CD4-positive, alpha-beta memory T cell (primary cell): ENCODE measurements at regions of chr2 and their contacts with region 1.

Region 1: DNA sequence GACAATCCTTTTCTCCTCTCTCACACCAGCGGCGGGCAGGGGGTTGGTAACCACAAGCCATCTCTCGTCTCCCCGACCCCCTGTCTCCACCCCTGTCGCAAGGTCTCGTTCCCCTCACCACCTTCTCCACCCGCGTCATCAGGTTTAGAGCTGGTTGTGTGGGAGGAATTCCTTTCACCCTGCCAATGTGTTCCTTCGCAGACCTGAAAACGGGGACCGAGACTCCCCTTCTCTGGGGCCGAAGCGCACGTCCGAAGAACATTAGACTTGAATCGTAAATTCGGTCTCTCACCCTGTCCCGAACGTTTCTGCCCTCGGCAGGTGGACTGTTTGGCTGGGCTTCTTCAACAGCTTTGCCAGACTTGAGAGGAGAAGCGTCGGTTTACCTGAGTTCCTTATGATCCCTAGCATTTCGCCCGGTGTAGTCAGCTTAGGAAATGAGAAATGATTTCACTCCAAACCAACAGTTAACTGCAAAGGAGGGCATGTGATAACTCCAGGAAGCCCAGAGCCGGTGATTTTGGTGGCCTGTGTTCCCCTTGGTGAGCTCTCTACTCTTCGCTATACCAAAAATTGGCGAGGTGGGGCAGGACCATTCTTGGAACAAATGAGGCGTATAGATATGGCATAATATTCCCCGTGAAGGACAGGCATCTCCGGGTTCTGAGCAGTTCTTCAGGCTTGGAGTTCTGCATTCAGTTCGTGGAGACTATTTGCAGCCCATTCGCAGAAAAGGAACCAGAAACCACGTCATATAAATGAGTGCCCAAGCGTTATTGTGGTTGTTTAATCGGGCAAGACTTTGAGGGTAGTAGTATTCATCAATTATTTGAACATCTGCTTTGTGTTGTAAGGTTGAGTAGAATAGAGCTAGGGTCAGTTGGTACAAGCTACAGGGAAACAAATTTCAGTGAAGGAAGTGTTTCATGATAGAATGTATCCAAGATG is 694 bp downstream of the CFAP36 start:
- DNase-seq: peak in 2 of 5 donors; percentile 30 to 67
- H3K4me3 ChIP-seq: peak overlapping the region; percentile 69 to 84
- H3K4me3 Mint-ChIP-seq: peak overlapping the region; percentile 95 to 100 (median 98)
- H3K27ac ChIP-seq: peak overlapping the region; percentile 83
- H3K27ac Mint-ChIP-seq: peak overlapping the region; percentile 98 to 100 (median 99)
- H3K4me1 ChIP-seq: peaks cover 22% of the 10 kb centered on the region
- H3K4me1 Mint-ChIP-seq: peaks cover 11 to 23% (median 19%) of the 10 kb centered on the region in 4 donors
- H3K27me3 ChIP-seq: no peaks in the 10 kb centered on the region
- H3K27me3 Mint-ChIP-seq: no peaks in the 10 kb centered on the region

Region 2: GRCh38 chr2:54115284-54116137 is 1404.7 kb before region 1 on chr2 and contains the start of gene ACYP2:
- CTCF ChIA-PET with region 1: no interaction called
- POLR2A ChIA-PET with region 1: no interaction called
- intact Hi-C with region 1: loop called (anchors 5 kb)
- DNase-seq: peak; percentile 89 to 92 (median 89)
- H3K4me3 ChIP-seq: peak within 1 kb of the TSS; percentile 77 to 83
- H3K4me3 Mint-ChIP-seq: peak within 1 kb of the TSS; percentile 94 to 99 (median 97)
- H3K27ac ChIP-seq: peak within 1 kb of the TSS; percentile 93
- H3K27ac Mint-ChIP-seq: peak within 1 kb of the TSS; percentile 99 to 100 (median 99)
- H3K4me1 ChIP-seq: peaks cover 17% of the 10 kb centered on the region
- H3K4me1 Mint-ChIP-seq: peaks cover 12 to 27% (median 16%) of the 10 kb centered on the region in 4 donors
- H3K27me3 ChIP-seq: no peaks in the 10 kb centered on the region
- H3K27me3 Mint-ChIP-seq: no peaks in the 10 kb centered on the region
- total RNA-seq, gene ACYP2: 13.1 to 16.9 TPM

Region 3: GRCh38 chr2:55232084-55232862 is 287.9 kb before region 1 on chr2 and contains the starts of genes CLHC1 and RPS27A:
- CTCF ChIA-PET with region 1: no interaction called
- POLR2A ChIA-PET with region 1: interaction called, 9 read pairs
- intact Hi-C with region 1: loop called (anchors 2 kb)
- DNase-seq: peak; percentile 92 to 96 (median 94)
- H3K4me3 ChIP-seq: peak within 1 kb of the TSS; percentile 82 to 98
- H3K4me3 Mint-ChIP-seq: peak within 1 kb of the TSS; percentile 92 to 100 (median 100)
- H3K27ac ChIP-seq: peak within 1 kb of the TSS; percentile 97
- H3K27ac Mint-ChIP-seq: peak within 1 kb of the TSS; percentile 94 to 100 (median 98)
- H3K4me1 ChIP-seq: peaks cover 52% of the 10 kb centered on the region
- H3K4me1 Mint-ChIP-seq: peaks cover 46 to 75% (median 62%) of the 10 kb centered on the region in 4 donors
- H3K27me3 ChIP-seq: no peaks in the 10 kb centered on the region
- H3K27me3 Mint-ChIP-seq: no peaks in the 10 kb centered on the region
- total RNA-seq, gene CLHC1: 12.4 to 14.2 TPM
- total RNA-seq, gene RPS27A: 2,280 to 2,392 TPM

Region 4: DNA sequence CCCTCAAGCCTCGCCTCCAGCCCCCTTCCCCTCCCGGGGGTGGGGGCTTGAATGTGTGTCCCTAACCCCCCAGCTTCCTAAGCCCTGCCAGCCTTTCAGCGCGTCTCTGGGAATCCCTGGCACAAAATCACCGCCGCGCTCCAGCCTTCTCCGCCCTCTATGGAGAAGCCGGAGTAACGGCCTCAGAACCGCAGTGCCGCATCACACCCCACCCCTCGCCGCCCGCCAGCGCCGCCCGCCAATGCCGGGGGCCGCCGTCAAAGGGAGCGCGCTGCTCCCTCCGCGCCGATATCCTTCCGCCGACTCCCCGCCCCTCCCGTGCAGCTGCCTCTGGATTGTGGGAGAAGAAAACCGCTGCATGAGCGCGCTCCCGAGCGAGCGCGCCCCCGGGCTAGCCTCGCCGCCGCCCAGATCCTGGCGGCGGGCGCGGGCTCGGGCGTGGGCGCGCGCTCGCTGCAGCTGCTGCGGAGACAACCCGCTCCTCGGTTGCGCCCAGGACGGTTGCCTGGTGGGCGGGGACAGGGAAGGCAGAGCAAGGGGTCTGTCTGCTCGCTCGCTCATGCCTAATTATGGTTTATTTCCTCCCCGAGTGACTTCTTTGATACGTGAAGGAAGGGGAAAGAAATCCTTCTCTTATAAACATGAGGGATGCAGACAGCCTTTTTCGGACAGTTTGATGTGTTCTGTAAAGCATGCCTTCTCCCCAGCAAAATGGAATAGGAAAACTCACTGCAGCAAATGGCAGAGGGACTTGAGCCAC is 100.4 kb before region 1 on chr2 and contains the start of gene CCDC88A:
- CTCF ChIA-PET with region 1: interaction called, 5 read pairs
- POLR2A ChIA-PET with region 1: interaction called, 15 read pairs
- intact Hi-C with region 1: loop called (anchors 1 kb)
- DNase-seq: peak; percentile 86 to 88 (median 86)
- H3K4me3 ChIP-seq: peak within 1 kb of the TSS; percentile 85 to 94
- H3K4me3 Mint-ChIP-seq: peak within 1 kb of the TSS; percentile 77 to 96 (median 94)
- H3K27ac ChIP-seq: peak within 1 kb of the TSS; percentile 57
- H3K27ac Mint-ChIP-seq: peak within 1 kb of the TSS; percentile 83 to 95 (median 91)
- H3K4me1 ChIP-seq: peaks cover 21% of the 10 kb centered on the region
- H3K4me1 Mint-ChIP-seq: peaks cover 20 to 41% (median 30%) of the 10 kb centered on the region in 4 donors
- H3K27me3 ChIP-seq: no peaks in the 10 kb centered on the region
- H3K27me3 Mint-ChIP-seq: peaks cover 1 to 2% of the 10 kb centered on the region in 2 donors
- total RNA-seq, gene CCDC88A: 18.7 to 19.1 TPM

Region 5: GRCh38 chr2:55547001-55547400 is 26.8 kb after region 1 on chr2:
- CTCF ChIA-PET with region 1: no interaction called
- POLR2A ChIA-PET with region 1: interaction called, 17 read pairs
- intact Hi-C with region 1: no loop called
- DNase-seq: no peak
- H3K4me3 ChIP-seq: no peak overlapping the region
- H3K4me3 Mint-ChIP-seq: no peak overlapping the region
- H3K27ac ChIP-seq: no peak overlapping the region
- H3K27ac Mint-ChIP-seq: peak overlapping the region in 1 of 7 donors; percentile 30
- H3K4me1 ChIP-seq: no peaks in the 10 kb centered on the region
- H3K4me1 Mint-ChIP-seq: peaks cover 0 to 6% (median 3%) of the 10 kb centered on the region in 4 donors
- H3K27me3 ChIP-seq: no peaks in the 10 kb centered on the region
- H3K27me3 Mint-ChIP-seq: no peaks in the 10 kb centered on the region